ENCODE measurements at regions of chr9 and their contacts with region 1.

Region 1: GRCh38 chr9:35903049-35903448 is 3.0 kb upstream of the HRCT1 start:
- DNase-seq: peak; percentile 85
- H3K4me3 Mint-ChIP-seq: no peak overlapping the region
- H3K27ac Mint-ChIP-seq: no peak overlapping the region
- H3K4me1 Mint-ChIP-seq: peaks cover 8% of the 10 kb centered on the region
- H3K27me3 Mint-ChIP-seq: peaks cover 19% of the 10 kb centered on the region

Region 2: DNA sequence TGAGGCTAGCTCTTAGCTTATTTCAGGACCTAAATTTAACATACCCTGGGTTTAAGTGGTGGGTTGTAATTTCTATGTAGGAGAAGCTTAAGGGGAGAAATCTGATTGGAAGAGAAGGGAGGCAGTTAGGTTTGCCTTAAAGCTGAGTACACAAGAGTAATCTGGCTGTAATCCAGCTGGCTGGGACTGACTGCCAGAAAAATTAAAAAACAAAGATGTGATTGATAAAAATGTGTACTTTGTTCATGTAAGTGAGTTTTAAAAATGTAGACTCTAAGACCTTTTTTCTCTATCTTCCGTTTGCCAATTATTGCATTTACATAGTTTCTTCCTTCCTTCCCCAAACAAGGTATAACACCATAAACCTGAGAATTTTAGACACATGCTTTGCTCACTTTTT is 131.5 kb before region 1 on chr9:
- intact Hi-C with region 1: no loop called
- DNase-seq: no peak
- H3K4me3 Mint-ChIP-seq: no peak overlapping the region
- H3K27ac Mint-ChIP-seq: no peak overlapping the region
- H3K4me1 Mint-ChIP-seq: peaks cover 8% of the 10 kb centered on the region
- H3K27me3 Mint-ChIP-seq: no peaks in the 10 kb centered on the region

Region 3: DNA sequence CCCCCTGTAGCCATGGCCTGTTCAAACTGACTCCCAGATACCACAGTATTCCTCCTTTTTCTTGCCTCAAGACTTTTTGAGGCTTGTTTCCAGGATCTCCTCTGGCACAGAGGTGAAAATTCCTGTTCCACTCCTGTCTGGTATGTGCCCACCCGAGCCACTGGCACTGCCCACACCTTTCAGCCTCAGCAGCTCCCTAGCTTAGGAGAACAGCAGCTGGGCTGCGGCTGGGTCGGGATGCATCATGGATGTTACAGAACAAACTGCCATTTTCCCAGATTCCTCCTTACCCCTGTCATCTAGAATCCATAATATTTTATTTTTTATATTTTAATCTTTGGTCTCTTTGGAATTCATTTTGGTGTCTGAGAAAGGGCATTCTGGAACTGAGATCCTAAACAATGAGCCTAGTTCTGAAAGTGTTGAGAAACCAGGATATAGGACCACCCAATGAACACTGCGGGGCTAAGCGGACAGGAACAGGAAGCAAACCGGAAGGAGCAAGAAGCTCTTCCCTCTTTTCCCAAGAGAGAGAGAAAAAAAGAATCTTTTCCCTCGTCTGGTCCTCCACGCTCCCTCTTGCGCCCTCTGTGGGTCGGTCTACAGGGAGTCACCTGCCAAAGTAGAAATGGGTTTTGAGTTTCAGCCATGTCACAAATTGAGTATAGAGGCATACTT is 42.4 kb after region 1 on chr9:
- intact Hi-C with region 1: loop called (anchors 1 kb)
- DNase-seq: peak; percentile 89
- H3K4me3 Mint-ChIP-seq: no peak overlapping the region
- H3K27ac Mint-ChIP-seq: peak overlapping the region; percentile 20
- H3K4me1 Mint-ChIP-seq: peaks cover 14% of the 10 kb centered on the region
- H3K27me3 Mint-ChIP-seq: peaks cover 5% of the 10 kb centered on the region

Region 4: DNA sequence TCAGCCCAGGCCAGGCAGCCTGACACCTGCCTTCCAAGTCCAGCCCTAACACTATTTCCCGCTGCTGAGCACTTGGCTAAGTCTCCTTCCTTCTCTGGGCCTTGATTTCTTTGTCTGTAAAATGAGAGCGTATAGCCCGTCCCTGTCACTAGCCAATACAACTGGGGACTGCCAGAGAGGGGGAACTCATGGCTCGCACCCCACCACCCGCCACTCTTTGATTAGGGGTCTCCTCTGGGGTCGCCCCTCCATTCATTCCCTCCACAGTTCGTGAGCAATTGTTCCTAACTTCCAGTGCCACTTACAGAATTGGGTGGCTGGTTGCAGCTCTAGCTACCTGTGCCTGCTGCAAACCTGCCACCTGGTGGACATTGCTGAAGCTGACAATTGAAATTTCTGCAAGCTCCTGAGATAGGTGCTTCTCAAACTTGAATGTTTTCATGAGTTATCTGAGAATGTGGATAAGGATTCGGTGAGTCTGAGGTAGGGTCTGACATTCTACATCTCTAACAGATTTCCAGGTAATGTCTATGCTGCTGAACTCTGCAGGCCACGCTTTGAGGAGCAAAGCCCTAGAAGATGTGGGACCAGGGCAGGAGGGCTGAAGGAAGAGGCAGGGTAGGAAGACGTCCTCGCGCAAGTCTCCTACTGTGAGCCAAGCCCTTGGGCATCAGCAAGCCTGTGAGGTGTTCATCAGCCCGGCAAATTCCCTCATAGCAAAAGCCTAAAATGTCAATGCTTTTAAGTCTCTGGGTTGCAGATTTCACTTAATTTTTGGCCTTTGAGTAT is 120.4 kb after region 1 on chr9:
- intact Hi-C with region 1: loop called (anchors 1 kb)
- DNase-seq: peak; percentile 90
- H3K4me3 Mint-ChIP-seq: no peak overlapping the region
- H3K27ac Mint-ChIP-seq: no peak overlapping the region
- H3K4me1 Mint-ChIP-seq: no peaks in the 10 kb centered on the region
- H3K27me3 Mint-ChIP-seq: peaks cover 9% of the 10 kb centered on the region

Measured in activated CD4-positive, alpha-beta T cell treated with anti-CD3 and anti-CD28 coated beads, Interleukin-2, amount 10 ng/mL, durations not matched to agents 24 days and 14 days (primary cell).